ENCODE measurements at regions of chr5 and their contacts with region 1.

Region 1: GRCh38 chr5:107855171-107855570 is 184.4 kb upstream of the EFNA5 start:
- DNase-seq: no peak
- ATAC-seq: no peak
- H3K4me3 ChIP-seq: no peak overlapping the region
- H3K27ac ChIP-seq: no peak overlapping the region
- H3K4me1 ChIP-seq: no peaks in the 10 kb centered on the region
- H3K27me3 ChIP-seq: no peaks in the 10 kb centered on the region
- CTCF ChIP-seq: peak in 1 of 3 experiments; percentile 22; a peak in 1 of 6 replicates
- EP300 ChIP-seq: no peak
- POLR2A ChIP-seq: no peak
- RAD21 ChIP-seq: no peak

Region 2: GRCh38 chr5:107812570-107813141 is 42.5 kb before region 1 on chr5:
- CTCF ChIA-PET with region 1: no interaction called
- POLR2A ChIA-PET with region 1: no interaction called
- RAD21 ChIA-PET with region 1: interaction called, 7 read pairs
- SMC1A ChIA-PET with region 1: interaction called, 11 read pairs
- in situ Hi-C with region 1: no loop called
- intact Hi-C with region 1: no loop called
- DNase-seq: peak; percentile 79
- ATAC-seq: peak; percentile 88
- H3K4me3 ChIP-seq: peak overlapping the region; percentile 44; the same call in 1 of the 2 replicates
- H3K27ac ChIP-seq: peak overlapping the region; percentile 78
- H3K4me1 ChIP-seq: peaks cover 29% of the 10 kb centered on the region
- H3K27me3 ChIP-seq: no peaks in the 10 kb centered on the region
- CTCF ChIP-seq: no peak
- EP300 ChIP-seq: peak; percentile 86 to 96
- POLR2A ChIP-seq: no peak
- RAD21 ChIP-seq: peak; percentile 30; the same call in 1 of the 2 replicates

Region 3: DNA sequence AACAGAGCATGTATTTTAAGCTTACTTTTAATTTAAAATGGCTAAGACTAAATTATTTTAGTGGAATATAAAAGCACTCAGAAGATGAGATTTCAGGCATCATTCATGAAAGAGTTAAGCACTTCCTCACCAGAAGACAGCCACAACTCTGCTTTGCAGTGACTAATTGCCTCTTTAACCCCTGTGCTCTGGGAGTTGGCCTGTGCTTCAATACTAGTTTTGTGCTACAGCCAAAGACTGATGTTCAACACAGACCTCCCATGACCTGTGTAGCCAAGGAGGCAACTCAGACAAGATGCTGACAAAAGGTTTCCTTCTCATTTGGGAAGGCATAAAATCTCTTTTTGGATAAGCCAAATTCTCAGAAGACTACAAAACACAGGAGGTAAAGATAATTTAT is 173.2 kb after region 1 on chr5:
- CTCF ChIA-PET with region 1: no interaction called
- POLR2A ChIA-PET with region 1: no interaction called
- RAD21 ChIA-PET with region 1: no interaction called
- SMC1A ChIA-PET with region 1: no interaction called
- in situ Hi-C with region 1: no loop called
- intact Hi-C with region 1: no loop called
- DNase-seq: no peak
- ATAC-seq: peak; percentile 50; the same call in 2 of the 3 replicates
- H3K4me3 ChIP-seq: no peak overlapping the region
- H3K27ac ChIP-seq: no peak overlapping the region
- H3K4me1 ChIP-seq: no peaks in the 10 kb centered on the region
- H3K27me3 ChIP-seq: no peaks in the 10 kb centered on the region
- CTCF ChIP-seq: no peak
- EP300 ChIP-seq: no peak
- POLR2A ChIP-seq: no peak
- RAD21 ChIP-seq: no peak

Region 4: DNA sequence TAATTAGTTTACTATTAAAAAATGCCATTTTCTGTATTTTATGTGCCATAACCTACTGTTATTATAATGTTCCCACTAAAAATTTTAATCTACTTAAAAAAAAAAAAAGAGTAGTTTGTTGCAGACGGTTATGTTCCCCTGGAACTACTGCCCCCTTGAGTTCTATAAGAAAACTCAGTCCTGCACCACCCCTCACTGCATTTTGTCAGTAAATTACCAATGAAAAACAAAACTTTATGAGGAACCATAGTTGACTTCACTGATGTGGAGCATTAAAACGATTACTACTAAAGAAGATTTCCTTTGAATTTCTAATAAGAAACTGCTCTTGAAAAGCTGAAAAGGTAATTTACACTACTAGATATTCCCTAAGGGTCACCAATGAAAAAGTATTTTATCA is 238.0 kb after region 1 on chr5:
- CTCF ChIA-PET with region 1: no interaction called
- POLR2A ChIA-PET with region 1: no interaction called
- RAD21 ChIA-PET with region 1: no interaction called
- SMC1A ChIA-PET with region 1: no interaction called
- in situ Hi-C with region 1: no loop called
- intact Hi-C with region 1: loop called (anchors 10 kb)
- DNase-seq: no peak
- ATAC-seq: peak; percentile 59; the same call in 2 of the 3 replicates
- H3K4me3 ChIP-seq: no peak overlapping the region
- H3K27ac ChIP-seq: no peak overlapping the region
- H3K4me1 ChIP-seq: no peaks in the 10 kb centered on the region
- H3K27me3 ChIP-seq: no peaks in the 10 kb centered on the region
- CTCF ChIP-seq: peak; percentile 27 to 39 (median 38); a peak in 3 of 6 replicates
- EP300 ChIP-seq: no peak
- POLR2A ChIP-seq: no peak
- RAD21 ChIP-seq: peak; percentile 34; the same call in 1 of the 2 replicates